A549 (cell line): ENCODE measurements at regions of chr1 and their contacts with region 1.

Region 1: GRCh38 chr1:1387098-1388077 is 11.7 kb downstream of the CCNL2 start:
- DNase-seq: no peak
- ATAC-seq: no peak
- H3K4me3 ChIP-seq: no peak overlapping the region
- H3K27ac ChIP-seq: no peak overlapping the region
- H3K4me1 ChIP-seq: no peaks in the 10 kb centered on the region
- CTCF ChIP-seq: no peak
- EP300 ChIP-seq: no peak
- POLR2A ChIP-seq: no peak
- RAD21 ChIP-seq: no peak

Region 2: DNA sequence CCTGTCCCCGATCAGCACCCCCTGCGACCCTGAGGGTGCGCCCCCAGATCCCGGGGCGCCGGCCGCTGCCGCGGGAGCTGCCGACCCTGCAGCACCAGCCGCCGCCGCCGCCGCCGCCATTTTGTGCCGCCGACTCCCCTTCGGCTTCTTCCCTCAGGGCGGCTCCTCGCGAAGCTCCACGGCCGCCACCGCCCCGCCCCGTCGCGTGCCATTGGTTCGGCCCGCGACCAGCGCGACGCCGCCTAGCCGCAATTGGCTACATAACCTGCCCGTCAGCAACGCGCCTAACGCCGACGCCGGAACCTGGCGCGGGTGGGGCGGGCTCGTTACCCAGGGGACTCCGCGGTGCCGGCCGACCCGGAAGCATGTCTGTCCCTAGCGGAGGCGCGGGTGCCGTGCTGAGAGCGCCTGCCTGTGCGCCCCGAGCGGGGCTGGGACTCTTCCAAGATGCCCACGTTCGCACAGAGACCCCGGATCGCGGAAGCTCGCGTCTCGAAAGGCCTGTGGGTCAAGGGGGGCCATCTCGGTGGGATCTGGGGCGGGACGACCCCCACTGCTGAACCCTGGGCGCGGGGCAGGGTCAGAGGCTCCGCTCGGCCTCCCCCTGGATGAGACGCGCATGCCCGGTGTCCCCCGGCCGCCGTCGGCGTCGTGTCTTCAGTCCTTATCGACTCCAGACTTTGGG is 11.9 kb after region 1 on chr1 and contains the start of gene CCNL2:
- CTCF ChIA-PET with region 1: interaction called, 13 read pairs
- POLR2A ChIA-PET with region 1: interaction called, 4 read pairs
- DNase-seq: peak; percentile 83 to 97
- ATAC-seq: peak; percentile 95 to 96
- H3K4me3 ChIP-seq: peak within 1 kb of the TSS; percentile 96
- H3K27ac ChIP-seq: peak within 1 kb of the TSS; percentile 93 to 99
- H3K4me1 ChIP-seq: peaks cover 29% of the 10 kb centered on the region
- CTCF ChIP-seq: 0 out of 3 replicates have a peak, but pooled peaks have one; percentile 7
- EP300 ChIP-seq: no peak
- POLR2A ChIP-seq: peak; percentile 60
- RAD21 ChIP-seq: no peak
- polyA plus RNA-seq, gene CCNL2: 111 TPM in 2 replicates